ENCODE measurements at regions of chr7 and their contacts with region 1.

Region 1: GRCh38 chr7:101856473-101857357 is 39.3 kb downstream of the CUX1 start:
- DNase-seq: peak; percentile 62 to 90 (median 77)
- ATAC-seq: peak; percentile 92
- H3K4me3 ChIP-seq: peak overlapping the region; percentile 59 to 69
- H3K4me3 Mint-ChIP-seq: peak overlapping the region; percentile 99
- H3K27ac ChIP-seq: peak overlapping the region; percentile 62 to 88
- H3K27ac Mint-ChIP-seq: peak overlapping the region; percentile 99
- H3K4me1 ChIP-seq: peaks cover 20% of the 10 kb centered on the region
- H3K4me1 Mint-ChIP-seq: peaks cover 50% of the 10 kb centered on the region
- H3K27me3 ChIP-seq: no peaks in the 10 kb centered on the region
- H3K27me3 Mint-ChIP-seq: no peaks in the 10 kb centered on the region
- CTCF ChIP-seq: peak; percentile 55

Region 2: DNA sequence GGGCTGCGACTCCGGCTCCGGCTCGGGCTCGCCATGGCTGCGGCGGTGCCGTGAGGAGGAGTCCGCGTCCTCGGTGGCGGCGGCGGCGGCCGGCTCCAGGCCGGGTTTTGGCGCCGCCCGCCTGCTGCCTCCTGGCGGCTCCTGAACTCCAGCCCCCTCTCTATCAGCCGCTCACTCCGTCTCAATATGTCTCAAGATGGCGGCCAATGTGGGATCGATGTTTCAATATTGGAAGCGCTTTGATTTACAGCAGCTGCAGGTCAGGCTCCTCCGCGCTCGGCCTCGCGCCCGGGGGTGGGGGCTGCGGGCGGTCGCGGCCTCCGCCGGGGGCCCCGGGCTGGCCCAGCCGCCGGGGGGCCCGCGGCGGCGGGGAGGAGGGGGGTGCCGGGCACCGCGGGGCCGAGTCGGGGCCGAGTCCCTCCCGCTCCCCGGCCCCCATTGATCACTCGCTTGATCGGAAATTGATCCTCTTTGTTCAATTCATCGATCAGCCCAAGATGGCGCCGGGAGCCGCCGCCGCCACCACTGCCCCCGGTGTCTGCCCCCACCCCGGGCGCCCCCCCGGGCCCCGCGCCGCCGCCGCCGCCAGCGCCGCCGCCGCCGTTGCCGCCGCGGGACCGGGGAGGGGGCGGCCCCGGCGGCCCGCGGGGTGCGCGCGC is 40.8 kb before region 1 on chr7:
- CTCF ChIA-PET with region 1: interaction called, 4 read pairs
- POLR2A ChIA-PET with region 1: interaction called, 5 read pairs
- intact Hi-C with region 1: loop called (anchors 1 kb)
- DNase-seq: peak; percentile 39 to 88 (median 71)
- ATAC-seq: peak; percentile 78
- H3K4me3 ChIP-seq: peak overlapping the region; percentile 38 to 55
- H3K4me3 Mint-ChIP-seq: peak overlapping the region; percentile 85
- H3K27ac ChIP-seq: no peak overlapping the region
- H3K27ac Mint-ChIP-seq: no peak overlapping the region
- H3K4me1 ChIP-seq: peaks cover 16% of the 10 kb centered on the region
- H3K4me1 Mint-ChIP-seq: peaks cover 36% of the 10 kb centered on the region
- H3K27me3 ChIP-seq: no peaks in the 10 kb centered on the region
- H3K27me3 Mint-ChIP-seq: no peaks in the 10 kb centered on the region
- CTCF ChIP-seq: no peak

Measured in CD8-positive, alpha-beta T cell (primary cell).